Activated naive CD4-positive, alpha-beta T cell treated with anti-CD3 and anti-CD28 coated beads for 36 hours (primary cell): ENCODE measurements at regions of chr1 and their contacts with region 1.

Region 1: DNA sequence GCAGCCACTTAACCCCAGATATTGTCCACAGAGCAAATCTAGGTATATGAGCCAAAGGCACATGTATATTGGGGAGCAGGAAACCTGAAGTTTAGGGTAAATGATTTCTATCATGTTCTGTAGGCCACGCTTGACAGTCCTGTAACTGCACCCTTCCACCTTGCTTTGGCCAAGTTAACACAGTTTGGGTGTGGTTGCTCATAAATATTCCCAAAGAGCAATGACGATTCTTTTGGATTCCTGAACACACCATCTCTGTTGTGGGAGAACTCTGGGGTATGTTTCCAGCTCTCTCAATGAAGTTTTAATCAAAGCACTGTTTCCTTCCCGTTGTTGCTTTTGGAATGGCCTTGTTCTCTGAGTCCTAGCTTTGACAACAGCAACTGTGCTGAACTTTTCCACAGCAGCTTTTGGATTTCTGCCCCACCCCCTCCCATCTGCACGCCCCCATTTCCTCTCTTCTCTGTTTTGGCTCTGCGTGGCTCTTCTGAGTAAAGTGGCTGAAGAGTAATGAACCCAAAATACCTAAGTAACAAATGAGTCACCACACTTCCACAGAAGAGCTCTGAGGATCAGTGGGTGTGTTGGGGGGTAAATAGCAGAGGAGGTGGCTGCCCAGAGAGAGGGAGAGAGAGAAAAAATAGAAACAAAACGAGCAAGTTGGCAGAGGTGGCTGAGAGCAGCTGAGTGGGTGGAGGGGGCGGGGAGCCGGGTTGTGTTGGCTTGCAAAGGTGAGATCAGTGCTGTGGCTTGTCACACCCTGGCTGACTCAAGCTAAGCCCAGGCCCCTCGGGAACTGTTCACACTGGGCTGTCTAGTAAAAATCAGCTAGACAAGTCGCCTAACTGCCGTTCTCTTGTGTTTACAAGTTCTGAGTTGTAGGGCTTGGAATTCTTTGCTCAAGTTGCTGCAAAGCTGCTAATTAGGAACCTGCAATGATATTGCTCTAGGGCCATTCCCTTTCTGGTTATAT is 26.9 kb upstream of the RAP1A start:
- DNase-seq: peak; percentile 96
- H3K4me3 Mint-ChIP-seq: peak overlapping the region; percentile 54
- H3K27ac Mint-ChIP-seq: peak overlapping the region; percentile 86
- H3K4me1 Mint-ChIP-seq: peaks cover 56% of the 10 kb centered on the region
- H3K27me3 Mint-ChIP-seq: no peaks in the 10 kb centered on the region

Region 2: DNA sequence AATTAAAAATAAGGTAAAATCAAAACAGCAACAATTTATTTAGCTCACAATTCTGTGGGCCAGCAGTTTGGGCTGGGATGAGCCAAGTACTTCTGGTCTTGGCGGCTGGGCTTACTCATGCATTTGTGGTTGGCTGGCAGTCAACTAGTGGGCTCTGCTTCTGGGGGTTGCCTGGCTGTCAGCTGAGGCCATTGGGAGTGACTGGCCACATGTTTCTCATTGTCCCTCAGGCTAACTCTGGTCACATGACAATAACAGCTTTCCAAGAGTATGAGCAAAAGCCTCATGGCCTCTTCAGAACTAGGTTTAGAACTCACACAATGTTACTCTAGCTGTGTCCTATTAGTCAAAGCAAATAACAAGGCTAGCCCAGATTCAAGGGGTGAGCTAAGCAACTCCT is 317.6 kb before region 1 on chr1:
- CTCF ChIA-PET with region 1: no interaction called
- intact Hi-C with region 1: loop called (anchors 10 kb)
- DNase-seq: peak; percentile 46
- H3K4me3 Mint-ChIP-seq: no peak overlapping the region
- H3K27ac Mint-ChIP-seq: peak overlapping the region; percentile 32
- H3K4me1 Mint-ChIP-seq: peaks cover 47% of the 10 kb centered on the region
- H3K27me3 Mint-ChIP-seq: peaks cover 22% of the 10 kb centered on the region

Region 3: DNA sequence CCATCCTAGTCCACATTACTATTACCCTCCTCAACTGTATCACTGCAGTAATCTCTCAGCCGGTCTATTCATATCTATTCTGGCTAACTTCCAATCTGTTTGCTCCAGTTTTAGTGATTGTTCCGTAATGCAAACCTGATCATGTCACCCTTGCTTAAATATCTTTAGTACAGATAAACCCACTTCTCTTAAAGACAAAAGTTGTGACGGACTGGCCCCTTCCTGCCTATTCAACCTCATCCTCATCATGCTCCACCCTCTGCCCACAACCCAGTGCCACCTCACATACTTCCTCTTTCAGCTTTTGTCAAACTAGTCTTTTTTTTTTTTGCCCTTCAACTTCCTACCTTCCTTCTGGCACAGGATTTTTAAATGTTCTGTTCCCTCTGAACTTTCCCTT is 121.7 kb before region 1 on chr1:
- CTCF ChIA-PET with region 1: no interaction called
- intact Hi-C with region 1: loop called (anchors 2 kb)
- DNase-seq: peak; percentile 88
- H3K4me3 Mint-ChIP-seq: no peak overlapping the region
- H3K27ac Mint-ChIP-seq: no peak overlapping the region
- H3K4me1 Mint-ChIP-seq: peaks cover 24% of the 10 kb centered on the region
- H3K27me3 Mint-ChIP-seq: no peaks in the 10 kb centered on the region

Region 4: GRCh38 chr1:111516005-111516535 is 76.6 kb before region 1 on chr1:
- CTCF ChIA-PET with region 1: interaction called, 3 read pairs
- intact Hi-C with region 1: loop called (anchors 2 kb)
- DNase-seq: peak; percentile 54
- H3K4me3 Mint-ChIP-seq: peak overlapping the region; percentile 54
- H3K27ac Mint-ChIP-seq: no peak overlapping the region
- H3K4me1 Mint-ChIP-seq: peaks cover 34% of the 10 kb centered on the region
- H3K27me3 Mint-ChIP-seq: peaks cover 2% of the 10 kb centered on the region

Region 5: GRCh38 chr1:111570781-111571181 is 21.9 kb before region 1 on chr1:
- CTCF ChIA-PET with region 1: interaction called, 6 read pairs
- intact Hi-C with region 1: loop called (anchors 2 kb)
- DNase-seq: peak; percentile 61
- H3K4me3 Mint-ChIP-seq: no peak overlapping the region
- H3K27ac Mint-ChIP-seq: no peak overlapping the region
- H3K4me1 Mint-ChIP-seq: peaks cover 11% of the 10 kb centered on the region
- H3K27me3 Mint-ChIP-seq: no peaks in the 10 kb centered on the region

Region 6: GRCh38 chr1:111619635-111620440 is 27.2 kb after region 1 on chr1 and contains the start of gene RAP1A:
- CTCF ChIA-PET with region 1: interaction called, 12 read pairs
- intact Hi-C with region 1: loop called (anchors 1 kb)
- DNase-seq: peak; percentile 97
- H3K4me3 Mint-ChIP-seq: peak within 1 kb of the TSS; percentile 93
- H3K27ac Mint-ChIP-seq: peak within 1 kb of the TSS; percentile 96
- H3K4me1 Mint-ChIP-seq: peaks cover 68% of the 10 kb centered on the region
- H3K27me3 Mint-ChIP-seq: no peaks in the 10 kb centered on the region
- total RNA-seq, gene RAP1A: 152 to 155 TPM